SK-N-SH (cell line): ENCODE measurements at regions of chr14 and their contacts with region 1.

Region 1: DNA sequence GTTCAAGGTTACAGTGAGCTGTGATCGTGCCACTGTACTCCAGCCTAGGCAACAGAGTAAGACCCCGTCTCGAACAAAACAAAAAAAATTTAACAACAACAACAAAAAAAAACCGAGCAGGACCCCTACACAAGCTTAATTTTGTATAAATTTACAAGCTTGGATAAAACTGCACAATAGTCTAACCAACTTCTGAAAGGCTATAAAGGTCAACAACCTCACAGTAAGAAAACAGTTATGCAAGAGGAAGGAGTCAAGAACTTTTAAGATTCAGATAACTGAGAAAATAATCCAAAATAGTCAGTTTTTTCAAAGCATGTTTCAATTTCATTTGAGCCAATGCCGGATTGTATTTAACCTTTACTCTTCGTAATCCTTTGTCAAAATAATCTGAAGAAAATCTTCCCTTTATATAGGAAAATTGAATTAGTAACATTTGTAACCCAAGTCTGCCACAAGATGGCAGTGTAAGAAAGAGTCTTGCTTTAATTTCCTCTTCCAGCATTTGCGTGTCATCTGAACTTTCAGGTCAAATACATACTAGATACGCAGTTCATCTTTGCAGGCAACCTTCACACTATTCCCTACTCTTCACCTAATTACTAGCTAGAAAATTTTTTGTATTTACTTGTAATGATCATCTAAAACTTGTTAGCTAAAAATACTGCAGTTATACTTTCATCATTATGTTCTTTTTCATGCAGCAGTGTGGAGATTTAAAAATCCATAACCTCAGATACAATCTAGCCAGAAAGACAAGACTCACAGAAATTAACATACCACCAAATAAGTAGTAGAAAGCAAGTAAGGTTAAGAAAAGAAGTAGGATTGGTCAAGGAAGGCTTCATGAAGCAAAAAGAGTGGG is 5.8 kb downstream of the CCNB1IP1 start:
- DNase-seq: peak; percentile 55
- H3K4me3 ChIP-seq: no peak overlapping the region
- H3K27ac ChIP-seq: peak overlapping the region; percentile 17 to 55; a peak in 2 of 4 replicates
- H3K4me1 ChIP-seq: peaks cover 0 to 5% of the 10 kb centered on the region in 2 experiments; a peak in 2 of 4 replicates
- H3K27me3 ChIP-seq: no peaks in the 10 kb centered on the region
- CTCF ChIP-seq: peak; percentile 82
- EP300 ChIP-seq: no peak
- RAD21 ChIP-seq: peak; percentile 84

Region 2: DNA sequence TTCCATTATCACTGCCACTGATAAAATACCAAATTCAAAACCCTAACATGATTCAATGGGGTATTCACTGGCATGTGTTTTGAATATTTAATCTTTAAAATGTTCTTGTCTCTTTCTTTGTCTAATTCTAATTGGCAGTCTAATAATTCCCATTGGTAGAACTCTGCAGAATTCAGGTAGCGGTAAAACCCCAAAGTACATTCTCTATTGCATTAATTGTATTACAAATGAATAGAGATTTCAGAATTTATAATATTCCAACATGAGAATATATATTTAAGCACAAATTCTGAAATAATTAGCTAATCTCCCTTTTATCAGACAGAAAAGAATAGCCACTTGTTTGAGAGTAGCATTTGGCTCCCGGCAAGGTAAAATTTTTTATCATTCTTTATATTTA is 188.7 kb before region 1 on chr14 and contains the start of gene OR4N5:
- CTCF ChIA-PET with region 1: no interaction called
- POLR2A ChIA-PET with region 1: no interaction called
- DNase-seq: no peak
- H3K4me3 ChIP-seq: no peak within 1 kb of the TSS
- H3K27ac ChIP-seq: no peak within 1 kb of the TSS
- H3K4me1 ChIP-seq: no peaks in the 10 kb centered on the region
- H3K27me3 ChIP-seq: peaks cover 6% of the 10 kb centered on the region; the same call in 1 of the 2 replicates
- CTCF ChIP-seq: no peak
- EP300 ChIP-seq: no peak
- RAD21 ChIP-seq: no peak
- polyA plus RNA-seq, gene OR4N5: not detected in 2 replicates

Region 3: DNA sequence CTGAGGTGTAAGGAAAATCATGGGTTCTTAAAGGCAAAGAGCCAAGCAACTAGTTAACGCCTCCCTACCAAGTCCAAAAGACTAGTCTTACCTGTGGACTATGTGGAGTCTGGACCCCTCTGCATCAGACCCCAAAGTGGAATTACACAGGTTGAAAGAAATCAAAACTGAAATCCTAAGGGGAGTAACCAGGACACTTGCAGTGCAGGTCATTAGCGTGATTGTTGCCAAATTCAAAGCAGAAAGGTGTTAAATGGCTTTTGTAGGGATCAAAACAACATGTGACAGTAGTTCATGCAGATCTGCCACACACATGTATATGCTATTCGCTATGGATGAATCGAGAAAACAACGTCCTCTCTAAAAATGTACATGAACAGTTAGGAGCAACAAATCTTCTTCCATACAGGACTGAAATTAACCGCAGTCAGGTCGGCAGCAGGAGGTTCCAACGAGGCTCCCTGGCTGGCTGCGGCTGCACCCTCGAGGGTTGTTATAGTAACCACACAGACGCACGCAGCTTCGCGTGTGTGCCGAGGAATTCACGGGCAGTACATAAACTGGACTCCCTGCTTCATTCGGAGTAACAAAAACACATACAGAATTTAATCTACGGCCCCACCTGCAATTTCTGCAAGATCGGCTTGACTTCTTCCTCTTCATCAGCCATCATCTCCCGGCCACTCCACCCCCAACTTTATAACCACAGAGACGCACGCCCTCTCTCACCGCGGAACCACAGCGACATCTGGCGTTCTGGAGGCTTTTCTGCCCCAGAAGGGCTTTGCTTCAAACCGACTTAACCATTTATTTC is 21.8 kb before region 1 on chr14 and contains the start of gene TTC5:
- CTCF ChIA-PET with region 1: interaction called, 19 read pairs
- POLR2A ChIA-PET with region 1: no interaction called
- DNase-seq: peak; percentile 87
- H3K4me3 ChIP-seq: peak within 1 kb of the TSS; percentile 63 to 83
- H3K27ac ChIP-seq: peak within 1 kb of the TSS in 1 of 2 experiments; percentile 20; a peak in 1 of 4 replicates
- H3K4me1 ChIP-seq: peaks cover 0 to 3% of the 10 kb centered on the region in 2 experiments; a peak in 2 of 4 replicates
- H3K27me3 ChIP-seq: no peaks in the 10 kb centered on the region
- CTCF ChIP-seq: peak; percentile 95
- EP300 ChIP-seq: no peak; a peak in 1 of 4 replicates
- RAD21 ChIP-seq: peak; percentile 34; the same call in 1 of the 2 replicates
- polyA plus RNA-seq, gene TTC5: 14.6 and 15.7 TPM in 2 replicates

Region 4: DNA sequence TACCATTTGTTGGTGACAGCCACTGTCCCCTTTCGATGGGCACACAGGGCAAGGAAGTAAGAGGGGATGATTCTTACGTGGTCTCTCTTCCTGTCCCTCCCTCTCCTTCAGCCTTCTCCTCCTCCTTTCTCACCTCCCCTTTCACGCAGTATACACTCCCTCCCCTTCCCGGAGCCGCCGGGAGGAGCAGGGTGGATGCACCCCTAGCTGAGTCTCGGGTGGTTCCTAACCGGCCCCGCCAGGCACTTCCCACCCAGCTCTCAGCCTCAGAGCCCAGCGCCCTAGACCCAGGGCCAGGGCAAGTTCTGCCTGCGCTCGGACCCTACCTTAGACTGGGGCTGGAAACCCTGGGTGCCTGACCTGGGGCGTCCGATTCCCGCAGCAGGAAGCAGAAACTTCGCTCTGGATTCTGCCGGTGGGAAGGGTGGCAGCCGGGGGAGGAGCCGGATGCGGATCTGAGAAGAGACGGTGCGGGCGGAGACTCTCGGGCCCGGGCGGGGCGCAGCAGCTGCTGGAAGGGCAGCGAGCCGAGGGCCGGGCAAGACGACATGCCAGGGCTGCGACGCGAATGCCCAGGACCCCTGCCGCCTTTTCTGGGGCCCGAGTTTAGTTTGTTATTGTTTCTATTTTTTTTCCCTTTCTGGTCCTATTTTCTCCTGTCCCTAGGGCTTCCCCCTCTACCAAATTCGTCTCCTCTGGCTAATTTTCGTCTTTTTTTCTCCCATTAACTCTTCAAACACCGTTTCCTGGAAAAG is 86.0 kb after region 1 on chr14 and contains the start of gene TEP1:
- CTCF ChIA-PET with region 1: interaction called, 19 read pairs
- POLR2A ChIA-PET with region 1: no interaction called
- DNase-seq: peak; percentile 87
- H3K4me3 ChIP-seq: peak within 1 kb of the TSS; percentile 60 to 85
- H3K27ac ChIP-seq: peak within 1 kb of the TSS; percentile 92 to 95
- H3K4me1 ChIP-seq: peaks cover 0 to 17% of the 10 kb centered on the region in 2 experiments; a peak in 2 of 4 replicates
- H3K27me3 ChIP-seq: no peaks in the 10 kb centered on the region
- CTCF ChIP-seq: no peak
- EP300 ChIP-seq: no peak; a peak in 1 of 4 replicates
- RAD21 ChIP-seq: no peak
- polyA plus RNA-seq, gene TEP1: 12.1 and 13.3 TPM in 2 replicates

Region 5: GRCh38 chr14:20690848-20691523 is 363.7 kb after region 1 on chr14:
- CTCF ChIA-PET with region 1: interaction called, 12 read pairs
- POLR2A ChIA-PET with region 1: no interaction called
- DNase-seq: peak; percentile 73
- H3K4me3 ChIP-seq: peak overlapping the region; percentile 6 to 7; a peak in 2 of 4 replicates
- H3K27ac ChIP-seq: no peak overlapping the region
- H3K4me1 ChIP-seq: no peaks in the 10 kb centered on the region
- H3K27me3 ChIP-seq: no peaks in the 10 kb centered on the region
- CTCF ChIP-seq: peak; percentile 81
- EP300 ChIP-seq: no peak
- RAD21 ChIP-seq: peak; percentile 84